ENCODE measurements at regions of chr7 and their contacts with region 1.

Region 1: GRCh38 chr7:140696680-140697446 is at the start of gene NDUFB2:
- DNase-seq: peak; percentile 91
- total RNA-seq, gene NDUFB2: 505 TPM

Region 2: GRCh38 chr7:140673063-140673773 is 23.6 kb before region 1 on chr7:
- intact Hi-C with region 1: loop called (anchors 1 kb)
- DNase-seq: no peak

Region 3: GRCh38 chr7:140902303-140902953 is 205.6 kb after region 1 on chr7:
- intact Hi-C with region 1: no loop called
- DNase-seq: no peak

Region 4: DNA sequence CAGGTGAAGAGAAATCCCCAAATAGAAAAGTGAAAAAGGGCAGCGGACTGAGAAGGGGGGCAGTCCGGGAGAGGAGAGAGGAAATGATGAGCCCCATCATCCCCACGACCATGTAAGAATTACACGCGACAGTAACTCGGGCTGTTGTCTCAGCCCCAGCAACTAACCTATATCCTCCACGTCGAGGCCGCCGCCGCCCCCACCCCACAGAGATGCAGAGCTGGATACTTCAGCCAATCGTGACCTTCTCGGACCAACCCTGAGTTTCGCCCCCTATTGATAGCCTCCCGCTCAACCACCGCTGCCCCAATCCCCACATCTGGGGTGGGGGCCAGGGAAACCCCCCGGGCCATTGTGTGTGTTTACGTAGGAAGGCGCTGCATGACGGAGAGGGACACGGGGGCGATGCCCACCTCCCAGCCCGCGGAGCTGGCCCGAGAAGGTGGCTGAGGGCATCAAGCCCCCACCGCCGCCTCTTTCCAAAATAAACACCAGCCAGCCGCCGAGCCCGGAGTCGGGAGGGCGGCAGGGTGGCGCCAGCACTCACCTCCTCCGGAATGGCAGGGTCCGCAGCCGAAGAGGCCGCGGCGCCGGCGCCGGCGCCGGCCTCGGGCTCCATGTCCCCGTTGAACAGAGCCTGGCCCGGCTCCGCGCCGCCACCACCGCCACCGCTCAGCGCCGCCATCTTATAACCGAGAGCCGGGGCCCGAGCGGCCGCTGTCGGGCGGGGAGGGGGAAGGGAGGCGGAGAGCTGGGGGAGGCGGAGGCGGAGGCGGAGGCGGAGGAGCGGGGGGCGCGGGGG is 227.4 kb after region 1 on chr7:
- intact Hi-C with region 1: loop called (anchors 10 kb)
- DNase-seq: peak; percentile 86

Region 5: GRCh38 chr7:141014524-141015395 is 317.9 kb after region 1 on chr7 and contains the start of gene MRPS33:
- intact Hi-C with region 1: loop called (anchors 10 kb)
- DNase-seq: peak; percentile 97
- total RNA-seq, gene MRPS33: 92.4 TPM

Region 6: GRCh38 chr7:141551094-141551781 is 854.4 kb after region 1 on chr7 and contains the start of gene AGK:
- intact Hi-C with region 1: loop called (anchors 10 kb)
- DNase-seq: peak; percentile 84
- total RNA-seq, gene AGK: 32.7 TPM